Activated T-helper 1 cell treated with anti-CD3 and anti-CD28 coated beads, Interleukin-12 subunit alpha, Interleukin-12 subunit beta, Interleukin-2, Interleukin-4 antibody, amounts not matched to agents 30 ng/mL and 10 ng/mL and 1 ng/mL, durations not matched to agents 14 hours and 24 hours and 36 hours (primary cell): ENCODE measurements at regions of chr3 and their contacts with region 1.

Region 1: DNA sequence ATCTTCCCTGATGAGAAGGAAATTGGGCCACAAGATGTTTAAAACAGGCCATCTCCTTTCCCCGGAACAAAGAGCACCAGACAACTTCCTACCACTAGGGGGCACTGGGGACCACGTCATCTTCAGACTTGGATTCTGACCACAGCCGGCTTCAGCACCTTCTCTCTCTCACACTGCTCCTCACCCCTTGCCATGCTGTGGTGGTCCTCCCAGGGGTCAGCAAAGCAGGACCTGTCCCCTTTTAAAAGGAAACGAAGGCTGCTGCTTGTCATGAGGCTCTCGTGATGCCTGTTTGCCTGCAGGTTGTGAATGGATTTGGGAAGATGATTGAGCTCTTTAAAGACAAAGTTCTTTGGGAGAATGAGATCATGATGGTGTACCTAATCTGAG is 16.2 kb downstream of the RFT1 start:
- DNase-seq: peak; percentile 76
- H3K4me3 Mint-ChIP-seq: no peak overlapping the region
- H3K27ac Mint-ChIP-seq: no peak overlapping the region
- H3K4me1 Mint-ChIP-seq: peaks cover 19% of the 10 kb centered on the region
- H3K27me3 Mint-ChIP-seq: no peaks in the 10 kb centered on the region

Region 2: GRCh38 chr3:52278510-52279069 is 835.4 kb before region 1 on chr3 and contains the start of gene WDR82:
- intact Hi-C with region 1: loop called (anchors 10 kb)
- DNase-seq: peak; percentile 95
- H3K4me3 Mint-ChIP-seq: peak within 1 kb of the TSS; percentile 97
- H3K27ac Mint-ChIP-seq: peak within 1 kb of the TSS; percentile 99
- H3K4me1 Mint-ChIP-seq: peaks cover 70% of the 10 kb centered on the region
- H3K27me3 Mint-ChIP-seq: no peaks in the 10 kb centered on the region
- total RNA-seq, gene WDR82: 105 and 107 TPM in 2 replicates

Region 3: GRCh38 chr3:52983336-52983807 is 130.6 kb before region 1 on chr3:
- intact Hi-C with region 1: loop called (anchors 2 kb)
- DNase-seq: peak; percentile 64
- H3K4me3 Mint-ChIP-seq: peak overlapping the region; percentile 38
- H3K27ac Mint-ChIP-seq: peak overlapping the region; percentile 85
- H3K4me1 Mint-ChIP-seq: peaks cover 23% of the 10 kb centered on the region
- H3K27me3 Mint-ChIP-seq: no peaks in the 10 kb centered on the region

Region 4: GRCh38 chr3:53102601-53103147 is 11.3 kb before region 1 on chr3:
- intact Hi-C with region 1: loop called (anchors 1 kb)
- DNase-seq: peak; percentile 62
- H3K4me3 Mint-ChIP-seq: peak overlapping the region; percentile 69
- H3K27ac Mint-ChIP-seq: peak overlapping the region; percentile 94
- H3K4me1 Mint-ChIP-seq: peaks cover 78% of the 10 kb centered on the region
- H3K27me3 Mint-ChIP-seq: no peaks in the 10 kb centered on the region

Region 5: DNA sequence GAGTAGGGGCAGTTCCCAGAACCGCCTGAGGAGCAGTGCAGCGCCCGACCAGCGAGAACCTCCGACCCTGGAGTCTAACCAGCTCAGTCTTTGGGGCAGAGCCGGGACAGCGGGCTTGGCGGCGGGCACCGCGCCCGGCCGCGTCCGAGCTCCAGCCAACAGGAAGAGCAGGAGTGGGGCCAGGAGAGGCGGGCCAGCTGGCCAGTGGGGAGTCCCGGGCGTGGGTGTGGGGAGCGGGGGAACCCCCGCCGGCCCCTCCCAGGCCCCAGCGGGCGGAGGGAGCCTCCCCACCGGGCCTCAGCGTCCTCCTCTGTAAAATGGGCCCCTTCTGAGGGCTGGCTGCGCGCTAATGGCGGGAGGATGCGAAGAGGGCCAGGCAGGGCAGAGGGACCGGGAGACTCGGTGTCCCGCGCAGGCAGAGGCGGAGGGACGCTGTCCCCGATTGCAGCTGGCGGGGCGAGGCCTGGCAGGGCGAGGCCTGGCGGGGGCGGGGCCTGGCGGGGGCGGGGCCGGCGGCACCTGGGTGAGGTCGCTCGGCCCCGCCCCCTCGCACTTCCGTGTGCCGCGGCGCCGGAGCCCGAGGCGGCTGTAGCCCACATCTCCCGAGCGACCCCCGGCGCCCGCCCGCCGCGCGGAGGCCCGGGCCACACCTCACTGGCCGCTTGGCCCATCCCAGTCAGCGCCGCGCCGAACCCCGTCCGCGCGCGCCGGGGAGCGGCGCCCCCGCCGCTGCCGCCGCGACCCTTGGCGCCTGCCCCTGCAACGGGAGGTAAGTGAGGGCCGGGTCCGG is 46.8 kb after region 1 on chr3 and contains the start of gene PRKCD:
- intact Hi-C with region 1: loop called (anchors 2 kb)
- DNase-seq: peak; percentile 67
- H3K4me3 Mint-ChIP-seq: peak within 1 kb of the TSS; percentile 89
- H3K27ac Mint-ChIP-seq: peak within 1 kb of the TSS; percentile 89
- H3K4me1 Mint-ChIP-seq: peaks cover 32% of the 10 kb centered on the region
- H3K27me3 Mint-ChIP-seq: peaks cover 18% of the 10 kb centered on the region
- total RNA-seq, gene PRKCD: 24.8 and 28.0 TPM in 2 replicates

Region 6: GRCh38 chr3:53255775-53256703 is 142.0 kb after region 1 on chr3 and contains the start of gene TKT:
- intact Hi-C with region 1: loop called (anchors 2 kb)
- DNase-seq: peak; percentile 79
- H3K4me3 Mint-ChIP-seq: peak within 1 kb of the TSS; percentile 95
- H3K27ac Mint-ChIP-seq: peak within 1 kb of the TSS; percentile 90
- H3K4me1 Mint-ChIP-seq: peaks cover 36% of the 10 kb centered on the region
- H3K27me3 Mint-ChIP-seq: peaks cover 8% of the 10 kb centered on the region
- total RNA-seq, gene TKT: 332 and 351 TPM in 2 replicates

Region 7: GRCh38 chr3:53709860-53710674 is 596.1 kb after region 1 on chr3:
- intact Hi-C with region 1: loop called (anchors 10 kb)
- DNase-seq: peak; percentile 45
- H3K4me3 Mint-ChIP-seq: no peak overlapping the region
- H3K27ac Mint-ChIP-seq: no peak overlapping the region
- H3K4me1 Mint-ChIP-seq: peaks cover 27% of the 10 kb centered on the region
- H3K27me3 Mint-ChIP-seq: peaks cover 7% of the 10 kb centered on the region